ENCODE measurements at regions of chr11 and their contacts with region 1.

Region 1: DNA sequence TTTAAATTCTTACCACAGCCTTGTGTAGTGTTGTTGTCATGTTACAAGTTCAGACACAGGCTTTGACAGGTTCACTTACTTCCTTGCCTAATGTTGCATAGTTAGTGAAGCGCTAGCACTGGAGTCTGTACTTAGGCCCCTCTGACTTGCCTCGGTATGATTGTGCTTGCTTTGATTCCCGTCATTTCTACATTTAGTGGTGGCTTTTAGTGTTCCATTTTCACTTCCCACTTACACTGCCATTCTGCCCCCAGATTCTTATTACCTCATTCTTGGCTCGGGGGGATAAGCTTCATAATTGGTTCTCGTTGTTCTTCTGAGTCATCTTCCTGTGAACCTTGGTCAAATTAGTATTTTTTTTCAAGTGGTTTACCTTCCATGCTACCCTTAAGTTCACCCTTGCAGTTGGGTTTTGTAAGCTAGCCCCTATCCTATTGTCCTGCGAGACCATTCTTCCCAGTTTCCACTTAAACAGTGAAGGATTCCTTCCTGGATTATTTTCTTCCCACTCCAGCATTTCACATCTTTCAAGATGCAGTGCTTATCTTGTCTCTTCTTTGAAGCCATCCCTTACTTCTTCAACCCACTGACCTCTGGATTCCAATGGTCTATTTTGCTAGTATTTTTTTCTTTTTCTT is 68.7 kb downstream of the DDX10 start:
- DNase-seq: peak; percentile 71
- H3K4me3 Mint-ChIP-seq: peak overlapping the region; percentile 51
- H3K27ac Mint-ChIP-seq: peak overlapping the region; percentile 82
- H3K4me1 Mint-ChIP-seq: peaks cover 52% of the 10 kb centered on the region
- H3K27me3 Mint-ChIP-seq: no peaks in the 10 kb centered on the region

Region 2: GRCh38 chr11:107176171-107177105 is 1557.2 kb before region 1 on chr11:
- CTCF ChIA-PET with region 1: no interaction called
- POLR2A ChIA-PET with region 1: no interaction called
- intact Hi-C with region 1: no loop called
- DNase-seq: no peak
- H3K4me3 Mint-ChIP-seq: no peak overlapping the region
- H3K27ac Mint-ChIP-seq: no peak overlapping the region
- H3K4me1 Mint-ChIP-seq: no peaks in the 10 kb centered on the region
- H3K27me3 Mint-ChIP-seq: no peaks in the 10 kb centered on the region

Region 3: GRCh38 chr11:108467091-108467823 is 266.3 kb before region 1 on chr11 and contains the start of gene C11orf65:
- CTCF ChIA-PET with region 1: no interaction called
- POLR2A ChIA-PET with region 1: no interaction called
- intact Hi-C with region 1: loop called (anchors 1 kb)
- DNase-seq: peak; percentile 97
- H3K4me3 Mint-ChIP-seq: peak within 1 kb of the TSS; percentile 99
- H3K27ac Mint-ChIP-seq: peak within 1 kb of the TSS; percentile 99
- H3K4me1 Mint-ChIP-seq: peaks cover 3% of the 10 kb centered on the region
- H3K27me3 Mint-ChIP-seq: no peaks in the 10 kb centered on the region
- total RNA-seq, gene C11orf65: 1.0 to 2.0 TPM

Region 4: DNA sequence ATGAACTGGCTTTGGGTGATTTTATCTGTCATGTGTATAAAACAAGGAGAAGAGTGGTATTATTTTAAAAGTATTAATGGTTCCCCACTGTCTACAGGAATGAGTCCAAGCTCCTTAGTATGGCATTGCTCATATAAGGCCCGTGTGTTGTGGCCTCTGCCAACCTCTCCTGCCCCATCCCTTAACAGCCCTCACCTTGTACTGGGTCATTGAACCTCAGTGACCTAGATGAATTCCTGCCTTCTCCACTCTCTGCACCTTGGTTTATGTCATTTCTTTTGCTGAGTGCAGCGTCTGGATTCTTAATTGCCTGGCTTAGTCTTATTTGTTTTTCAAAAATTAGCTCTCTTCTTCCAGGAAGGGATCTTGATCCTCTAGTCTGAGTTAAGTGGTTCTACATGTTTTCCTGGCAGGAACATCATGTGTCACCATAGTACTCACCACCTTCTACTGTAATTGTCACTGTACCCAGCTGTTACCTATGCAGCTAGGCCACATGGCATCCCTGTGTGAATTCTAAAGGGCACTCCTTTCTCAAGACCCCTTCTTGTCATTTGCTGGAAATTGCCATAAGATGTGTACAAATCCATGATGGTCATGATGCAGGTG is 199.2 kb before region 1 on chr11:
- CTCF ChIA-PET with region 1: no interaction called
- POLR2A ChIA-PET with region 1: no interaction called
- intact Hi-C with region 1: no loop called
- DNase-seq: no peak
- H3K4me3 Mint-ChIP-seq: no peak overlapping the region
- H3K27ac Mint-ChIP-seq: no peak overlapping the region
- H3K4me1 Mint-ChIP-seq: no peaks in the 10 kb centered on the region
- H3K27me3 Mint-ChIP-seq: no peaks in the 10 kb centered on the region

Region 5: GRCh38 chr11:108664730-108665525 is 68.7 kb before region 1 on chr11 and contains the start of gene DDX10:
- CTCF ChIA-PET with region 1: interaction called, 8 read pairs
- POLR2A ChIA-PET with region 1: interaction called, 7 read pairs
- intact Hi-C with region 1: loop called (anchors 1 kb)
- DNase-seq: peak; percentile 99
- H3K4me3 Mint-ChIP-seq: peak within 1 kb of the TSS; percentile 100
- H3K27ac Mint-ChIP-seq: peak within 1 kb of the TSS; percentile 80
- H3K4me1 Mint-ChIP-seq: peaks cover 44% of the 10 kb centered on the region
- H3K27me3 Mint-ChIP-seq: no peaks in the 10 kb centered on the region
- total RNA-seq, gene DDX10: 34.8 to 37.7 TPM

Region 6: DNA sequence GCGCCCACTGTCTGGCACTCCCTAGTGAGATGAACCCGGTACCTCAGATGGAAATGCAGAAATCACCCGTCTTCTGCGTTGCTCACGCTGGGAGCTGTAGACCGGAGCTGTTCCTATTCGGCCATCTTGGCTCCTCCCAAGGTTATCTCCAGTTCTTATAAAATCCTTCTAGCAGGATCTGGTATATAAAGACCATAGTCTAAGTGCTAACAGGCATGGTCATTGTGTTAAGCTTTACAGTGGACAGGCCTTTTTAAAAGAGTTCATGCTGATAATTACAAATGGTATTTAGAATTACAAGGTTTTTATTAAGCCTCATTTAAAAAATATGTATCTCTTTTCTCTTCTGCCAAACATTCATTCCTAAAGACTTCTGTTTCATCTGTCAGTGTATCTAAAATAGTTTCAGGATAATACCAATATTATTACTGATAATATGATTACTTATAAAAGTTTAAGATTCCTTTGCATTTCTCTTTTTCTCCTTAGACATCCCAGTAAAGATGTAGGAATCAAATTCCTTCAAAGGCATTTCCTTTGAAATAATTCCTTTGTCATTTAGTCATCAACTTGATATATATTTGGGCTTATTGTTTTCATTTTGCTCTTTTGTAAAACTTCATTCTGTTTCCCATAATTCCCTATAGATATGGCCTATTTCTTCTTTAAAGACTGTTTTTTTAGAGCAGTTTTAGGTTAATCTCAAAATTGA is 48.0 kb before region 1 on chr11:
- CTCF ChIA-PET with region 1: no interaction called
- POLR2A ChIA-PET with region 1: no interaction called
- intact Hi-C with region 1: no loop called
- DNase-seq: no peak
- H3K4me3 Mint-ChIP-seq: no peak overlapping the region
- H3K27ac Mint-ChIP-seq: no peak overlapping the region
- H3K4me1 Mint-ChIP-seq: peaks cover 4% of the 10 kb centered on the region
- H3K27me3 Mint-ChIP-seq: no peaks in the 10 kb centered on the region

Region 7: GRCh38 chr11:108718466-108718865 is 15.1 kb before region 1 on chr11:
- CTCF ChIA-PET with region 1: interaction called, 20 read pairs
- POLR2A ChIA-PET with region 1: interaction called, 5 read pairs
- intact Hi-C with region 1: loop called (anchors 1 kb)
- DNase-seq: no peak
- H3K4me3 Mint-ChIP-seq: no peak overlapping the region
- H3K27ac Mint-ChIP-seq: no peak overlapping the region
- H3K4me1 Mint-ChIP-seq: peaks cover 7% of the 10 kb centered on the region
- H3K27me3 Mint-ChIP-seq: no peaks in the 10 kb centered on the region

Region 8: DNA sequence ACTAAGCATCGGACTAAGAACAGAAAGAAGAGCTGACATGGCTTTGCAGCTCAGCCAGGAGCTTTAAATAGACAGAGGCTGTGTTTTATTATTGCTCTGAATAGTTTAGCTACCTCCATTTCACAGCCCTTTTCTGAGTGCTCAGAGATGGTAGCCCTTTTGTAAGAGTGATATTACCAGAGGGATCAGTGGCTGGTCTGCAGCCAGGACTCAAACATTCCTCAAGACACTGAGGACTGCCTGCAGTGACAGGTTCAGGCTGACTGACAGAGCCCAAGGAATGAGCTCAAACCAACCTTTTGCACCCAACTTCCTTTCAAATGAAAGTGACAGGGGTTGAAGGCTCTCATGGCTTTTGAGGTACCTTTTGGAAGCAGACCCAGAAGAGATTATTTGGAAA is 120.3 kb after region 1 on chr11:
- CTCF ChIA-PET with region 1: interaction called, 8 read pairs
- POLR2A ChIA-PET with region 1: no interaction called
- intact Hi-C with region 1: loop called (anchors 1 kb)
- DNase-seq: no peak
- H3K4me3 Mint-ChIP-seq: peak overlapping the region; percentile 18
- H3K27ac Mint-ChIP-seq: peak overlapping the region; percentile 4
- H3K4me1 Mint-ChIP-seq: peaks cover 25% of the 10 kb centered on the region
- H3K27me3 Mint-ChIP-seq: no peaks in the 10 kb centered on the region

Region 9: DNA sequence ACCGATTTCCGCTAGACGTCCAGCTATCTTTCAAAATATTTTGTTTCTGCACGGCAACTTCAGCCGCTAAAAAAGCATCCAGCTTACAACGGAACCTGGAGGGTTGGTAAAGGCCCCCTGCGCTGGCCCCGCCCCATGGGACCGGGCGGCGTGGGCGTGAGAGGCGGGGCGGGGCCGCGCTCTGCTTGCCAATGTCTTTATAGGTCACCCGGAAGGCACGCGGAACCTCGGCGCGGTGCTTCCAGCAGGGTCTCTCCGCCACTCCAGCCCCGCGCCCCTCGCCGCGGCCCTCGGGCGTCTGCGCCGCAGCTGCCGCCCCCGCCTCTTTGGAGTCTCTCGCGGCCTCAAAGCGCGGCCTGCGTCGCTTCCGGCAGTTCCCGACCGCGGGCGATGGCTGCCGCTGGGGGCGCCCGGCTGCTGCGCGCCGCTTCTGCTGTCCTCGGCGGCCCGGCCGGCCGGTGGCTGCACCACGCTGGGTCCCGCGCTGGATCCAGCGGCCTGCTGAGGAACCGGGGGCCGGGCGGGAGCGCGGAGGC is 1696.2 kb after region 1 on chr11 and contains the start of gene FDX1:
- CTCF ChIA-PET with region 1: no interaction called
- POLR2A ChIA-PET with region 1: no interaction called
- intact Hi-C with region 1: loop called (anchors 5 kb)
- DNase-seq: peak; percentile 90
- H3K4me3 Mint-ChIP-seq: peak within 1 kb of the TSS; percentile 98
- H3K27ac Mint-ChIP-seq: peak within 1 kb of the TSS; percentile 93
- H3K4me1 Mint-ChIP-seq: peaks cover 38% of the 10 kb centered on the region
- H3K27me3 Mint-ChIP-seq: no peaks in the 10 kb centered on the region
- total RNA-seq, gene FDX1: 9.8 to 11.2 TPM